ENCODE measurements at regions of chr17 and their contacts with region 1.

Region 1: DNA sequence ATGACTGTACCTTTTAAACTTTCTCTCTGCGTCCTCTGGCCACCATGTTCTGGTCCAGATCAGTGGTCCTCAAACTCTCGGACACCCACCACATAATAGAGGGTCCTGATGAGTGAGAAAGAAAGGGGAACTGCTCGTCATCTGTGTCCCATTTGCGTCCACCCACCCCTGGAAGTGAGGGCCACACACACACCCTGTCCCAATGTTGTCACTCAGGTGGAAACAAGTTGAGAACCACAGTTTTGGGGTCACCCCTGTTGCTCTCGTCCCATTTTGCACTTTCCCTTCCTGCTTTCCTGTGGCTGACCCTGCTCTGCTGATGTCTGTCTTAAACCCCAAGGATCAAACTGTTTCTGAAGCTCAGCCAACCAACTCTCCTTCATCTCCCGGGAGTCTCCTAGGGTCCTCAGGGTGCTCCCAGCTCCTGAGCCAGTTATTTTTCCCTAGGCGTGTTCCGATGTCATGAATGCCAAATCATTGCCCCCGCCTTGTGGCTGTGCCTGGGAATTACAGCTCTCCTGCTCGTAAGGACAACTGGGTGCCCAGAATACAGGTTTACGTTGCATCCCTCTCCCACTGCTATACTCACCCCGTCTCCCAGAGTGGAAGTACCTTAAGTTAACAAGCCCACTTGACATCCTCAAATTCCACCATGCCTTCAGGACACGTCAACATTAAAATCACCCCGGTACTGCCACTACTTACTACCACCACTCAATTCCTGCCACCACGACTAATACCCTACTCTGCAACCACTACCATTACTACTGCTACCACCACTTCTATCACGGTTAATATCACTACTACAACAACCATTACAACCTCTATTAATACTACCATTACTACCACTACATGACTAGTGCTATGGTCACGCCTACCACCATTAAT is 26.0 kb upstream of the HNF1B start:
- DNase-seq: peak; percentile 57 to 80 (median 71)
- ATAC-seq: peak; percentile 89 to 95 (median 90)
- H3K4me3 ChIP-seq: no peak overlapping the region
- H3K27ac ChIP-seq: no peak overlapping the region
- H3K4me1 ChIP-seq: no peaks in the 10 kb centered on the region
- H3K27me3 ChIP-seq: no peaks in the 10 kb centered on the region
- CTCF ChIP-seq: peak; percentile 67 to 86 (median 74)
- POLR2A ChIP-seq: no peak

Region 2: DNA sequence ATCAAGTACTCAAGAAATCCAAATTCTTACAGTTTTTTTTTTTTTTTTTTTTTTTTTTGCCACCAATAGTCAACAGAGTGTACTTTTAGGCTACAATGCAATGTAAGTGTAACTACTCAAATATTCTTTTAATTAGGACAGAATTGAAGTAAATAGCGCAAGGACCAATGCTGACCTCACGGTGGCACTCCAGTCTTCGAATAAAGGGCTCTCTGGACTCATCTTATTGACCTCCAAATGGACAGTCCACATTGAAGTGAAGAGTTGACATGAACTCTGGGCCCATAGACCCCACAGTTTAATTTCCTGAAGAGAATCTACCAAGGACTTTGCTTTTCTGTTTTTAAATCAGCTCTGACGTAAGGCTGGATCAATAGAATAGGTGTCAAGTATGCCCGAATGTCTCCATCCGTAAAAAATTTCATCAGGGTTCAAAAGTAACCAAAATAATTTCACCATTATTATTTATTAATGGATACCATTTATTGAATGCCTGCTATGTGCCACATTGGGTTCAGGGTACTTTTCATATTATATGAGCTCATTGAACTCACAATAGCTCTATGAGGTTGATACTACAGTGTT is 120.4 kb before region 1 on chr17:
- intact Hi-C with region 1: loop called in 1 of 2 experiments (anchors 10 kb)
- DNase-seq: peak in 1 of 3 donors; percentile 52
- ATAC-seq: peak; percentile 89 to 92 (median 92)
- H3K4me3 ChIP-seq: no peak overlapping the region
- H3K27ac ChIP-seq: no peak overlapping the region
- H3K4me1 ChIP-seq: no peaks in the 10 kb centered on the region
- H3K27me3 ChIP-seq: no peaks in the 10 kb centered on the region
- CTCF ChIP-seq: peak; percentile 46 to 62 (median 53)
- POLR2A ChIP-seq: no peak

Region 3: DNA sequence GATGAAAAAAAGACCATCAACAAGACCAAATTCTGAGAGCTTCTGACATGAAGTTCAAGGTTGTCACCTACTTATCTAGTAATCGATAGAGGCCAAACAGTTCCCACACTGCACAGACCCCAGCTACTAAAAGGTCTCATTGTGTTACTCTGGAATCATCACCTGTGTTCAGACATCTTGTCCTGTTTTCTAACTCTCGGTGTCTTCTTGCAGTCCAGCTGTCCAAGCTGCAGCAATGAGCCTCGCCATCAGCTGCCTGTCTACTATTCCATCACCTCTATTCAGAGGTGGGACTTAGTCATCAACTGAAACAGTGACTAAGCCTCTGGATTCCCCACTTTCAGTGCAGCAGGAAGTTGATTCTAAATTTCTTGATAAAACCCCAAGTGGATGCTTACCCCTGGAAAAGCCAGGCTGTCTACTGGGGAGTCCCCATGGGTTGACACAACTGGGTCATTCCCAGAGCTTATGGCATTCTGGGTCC is 72.7 kb before region 1 on chr17:
- intact Hi-C with region 1: loop called in 1 of 2 experiments (anchors 10 kb)
- DNase-seq: no peak
- ATAC-seq: peak in 2 of 4 donors; percentile 26 to 74
- H3K4me3 ChIP-seq: no peak overlapping the region
- H3K27ac ChIP-seq: no peak overlapping the region
- H3K4me1 ChIP-seq: peaks cover 0 to 10% (median 0%) of the 10 kb centered on the region in 4 donors
- H3K27me3 ChIP-seq: no peaks in the 10 kb centered on the region
- CTCF ChIP-seq: no peak
- POLR2A ChIP-seq: no peak

Region 4: DNA sequence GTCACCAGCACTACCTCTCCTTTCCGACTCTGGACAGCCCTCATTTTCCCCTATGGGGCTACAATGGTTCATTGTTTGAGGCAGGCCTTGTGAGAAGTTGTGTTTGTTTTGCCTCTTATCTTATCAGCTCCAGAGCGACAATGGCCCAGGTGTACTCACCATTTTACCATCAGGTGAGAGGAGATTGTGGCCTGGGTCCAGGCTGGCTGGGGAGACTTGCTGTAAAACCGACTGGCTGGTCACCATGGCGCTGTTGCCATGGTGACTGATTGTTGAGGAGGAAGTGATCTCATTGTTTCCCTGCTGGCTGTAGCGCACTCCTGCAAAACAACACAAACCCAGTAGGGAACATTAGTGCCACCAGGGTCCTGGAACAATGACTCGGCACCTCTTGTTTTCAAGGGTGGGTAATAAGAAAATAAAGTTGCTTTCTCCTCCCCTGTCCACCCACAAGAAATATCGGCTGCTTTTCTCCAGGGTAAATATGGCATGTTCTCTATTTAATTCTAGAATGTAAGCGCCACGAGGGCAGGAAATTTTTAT is 60.5 kb before region 1 on chr17:
- intact Hi-C with region 1: no loop called
- DNase-seq: peak; percentile 63 to 73 (median 70)
- ATAC-seq: peak in 1 of 4 donors; percentile 2
- H3K4me3 ChIP-seq: no peak overlapping the region
- H3K27ac ChIP-seq: peak overlapping the region in 1 of 3 donors; percentile 97
- H3K4me1 ChIP-seq: peaks cover 0 to 63% (median 30%) of the 10 kb centered on the region in 4 donors
- H3K27me3 ChIP-seq: no peaks in the 10 kb centered on the region
- CTCF ChIP-seq: no peak
- POLR2A ChIP-seq: no peak